Naive thymus-derived CD4-positive, alpha-beta T cell (primary cell): ENCODE measurements at regions of chr12 and their contacts with region 1.

Region 1: GRCh38 chr12:117025481-117026151 is 73.6 kb downstream of the TESC start:
- DNase-seq: peak in 7 of 9 donors; percentile 21 to 54 (median 36)
- ATAC-seq: peak; percentile 84
- H3K4me3 ChIP-seq: no peak overlapping the region
- H3K4me3 Mint-ChIP-seq: no peak overlapping the region
- H3K27ac ChIP-seq: no peak overlapping the region
- H3K27ac Mint-ChIP-seq: peak overlapping the region in 3 of 9 donors; percentile 62 to 69 (median 68)
- H3K4me1 ChIP-seq: no peaks in the 10 kb centered on the region
- H3K4me1 Mint-ChIP-seq: peaks cover 0 to 5% (median 4%) of the 10 kb centered on the region in 7 donors
- H3K27me3 ChIP-seq: no peaks in the 10 kb centered on the region
- H3K27me3 Mint-ChIP-seq: no peaks in the 10 kb centered on the region

Region 2: GRCh38 chr12:117002051-117002817 is 23.4 kb before region 1 on chr12:
- CTCF ChIA-PET with region 1: no interaction called
- POLR2A ChIA-PET with region 1: no interaction called
- intact Hi-C with region 1: no loop called
- DNase-seq: no peak
- ATAC-seq: no peak
- H3K4me3 ChIP-seq: no peak overlapping the region
- H3K4me3 Mint-ChIP-seq: no peak overlapping the region
- H3K27ac ChIP-seq: no peak overlapping the region
- H3K27ac Mint-ChIP-seq: no peak overlapping the region
- H3K4me1 ChIP-seq: no peaks in the 10 kb centered on the region
- H3K4me1 Mint-ChIP-seq: peaks cover 0 to 8% (median 0%) of the 10 kb centered on the region in 7 donors
- H3K27me3 ChIP-seq: no peaks in the 10 kb centered on the region
- H3K27me3 Mint-ChIP-seq: no peaks in the 10 kb centered on the region

Region 3: DNA sequence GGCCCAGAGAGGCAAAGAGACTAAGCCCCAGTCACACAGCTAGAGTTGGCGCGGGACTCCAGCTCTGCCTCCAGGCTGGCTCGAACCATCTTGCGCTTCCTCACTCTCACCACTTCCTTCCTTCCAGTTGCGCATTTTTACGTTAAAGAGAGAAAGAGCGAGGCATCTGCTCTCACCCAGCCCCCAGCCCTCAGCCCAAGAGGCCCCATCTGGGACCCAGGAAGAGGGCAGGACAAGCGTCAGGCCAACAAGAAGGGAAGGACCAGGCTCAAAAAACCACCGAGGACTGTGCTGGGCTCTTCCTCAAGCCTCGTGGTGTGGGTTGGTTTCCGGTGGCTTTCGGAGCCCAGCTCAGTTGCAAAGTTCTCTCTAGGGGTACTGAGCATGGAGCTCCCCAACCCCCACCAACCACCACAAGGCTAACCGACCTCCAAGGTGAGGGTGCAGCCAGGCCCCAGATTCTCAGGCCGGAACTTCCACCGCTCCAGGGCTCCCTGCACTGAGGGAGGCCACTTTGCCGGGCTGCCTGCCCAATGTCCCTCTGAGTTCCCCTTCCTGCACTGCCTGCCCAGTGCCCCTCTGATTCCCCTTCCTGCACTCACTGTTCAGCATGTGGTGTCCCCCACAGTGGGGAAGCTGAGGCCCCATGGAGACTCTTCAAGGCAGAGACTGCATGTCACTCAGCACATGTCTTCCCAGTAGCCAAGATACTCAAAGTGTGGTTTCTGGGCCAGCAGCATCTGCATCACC is 37.7 kb after region 1 on chr12:
- CTCF ChIA-PET with region 1: no interaction called
- POLR2A ChIA-PET with region 1: no interaction called
- intact Hi-C with region 1: loop called in 1 of 2 experiments (anchors 5 kb)
- DNase-seq: peak in 8 of 9 donors; percentile 14 to 52 (median 39)
- ATAC-seq: peak; percentile 67
- H3K4me3 ChIP-seq: peak overlapping the region; percentile 28
- H3K4me3 Mint-ChIP-seq: peak overlapping the region; percentile 67 to 87 (median 80)
- H3K27ac ChIP-seq: peak overlapping the region; percentile 28
- H3K27ac Mint-ChIP-seq: peak overlapping the region; percentile 81 to 95 (median 91)
- H3K4me1 ChIP-seq: peaks cover 21% of the 10 kb centered on the region in 2 donors
- H3K4me1 Mint-ChIP-seq: peaks cover 29 to 59% (median 48%) of the 10 kb centered on the region in 7 donors
- H3K27me3 ChIP-seq: no peaks in the 10 kb centered on the region
- H3K27me3 Mint-ChIP-seq: no peaks in the 10 kb centered on the region

Region 4: GRCh38 chr12:117119592-117120198 is 94.1 kb after region 1 on chr12:
- CTCF ChIA-PET with region 1: interaction called, 7 read pairs
- POLR2A ChIA-PET with region 1: no interaction called
- intact Hi-C with region 1: loop called in 1 of 2 experiments (anchors 1 kb)
- DNase-seq: peak in 4 of 9 donors; percentile 17 to 43 (median 21)
- ATAC-seq: peak; percentile 51
- H3K4me3 ChIP-seq: no peak overlapping the region
- H3K4me3 Mint-ChIP-seq: no peak overlapping the region
- H3K27ac ChIP-seq: no peak overlapping the region
- H3K27ac Mint-ChIP-seq: no peak overlapping the region
- H3K4me1 ChIP-seq: no peaks in the 10 kb centered on the region
- H3K4me1 Mint-ChIP-seq: peaks cover 0 to 4% (median 0%) of the 10 kb centered on the region in 7 donors
- H3K27me3 ChIP-seq: no peaks in the 10 kb centered on the region
- H3K27me3 Mint-ChIP-seq: no peaks in the 10 kb centered on the region